H1 (cell line): ENCODE measurements at regions of chr7 and their contacts with region 1.

Region 1: GRCh38 chr7:142445019-142445686 is 187.3 kb upstream of the PRSS58 start:
- DNase-seq: peak in 1 of 2 experiments; percentile 83
- H3K4me3 ChIP-seq: no peak overlapping the region
- H3K27ac ChIP-seq: no peak overlapping the region
- H3K4me1 ChIP-seq: peaks cover 2 to 13% (median 4%) of the 10 kb centered on the region in 4 experiments; a peak in 4 of 7 replicates
- H3K27me3 ChIP-seq: no peaks in the 10 kb centered on the region
- CTCF ChIP-seq: peak; percentile 72 to 93 (median 83)
- EP300 ChIP-seq: no peak
- POLR2A ChIP-seq: no peak
- RAD21 ChIP-seq: peak; percentile 80 to 82

Region 2: DNA sequence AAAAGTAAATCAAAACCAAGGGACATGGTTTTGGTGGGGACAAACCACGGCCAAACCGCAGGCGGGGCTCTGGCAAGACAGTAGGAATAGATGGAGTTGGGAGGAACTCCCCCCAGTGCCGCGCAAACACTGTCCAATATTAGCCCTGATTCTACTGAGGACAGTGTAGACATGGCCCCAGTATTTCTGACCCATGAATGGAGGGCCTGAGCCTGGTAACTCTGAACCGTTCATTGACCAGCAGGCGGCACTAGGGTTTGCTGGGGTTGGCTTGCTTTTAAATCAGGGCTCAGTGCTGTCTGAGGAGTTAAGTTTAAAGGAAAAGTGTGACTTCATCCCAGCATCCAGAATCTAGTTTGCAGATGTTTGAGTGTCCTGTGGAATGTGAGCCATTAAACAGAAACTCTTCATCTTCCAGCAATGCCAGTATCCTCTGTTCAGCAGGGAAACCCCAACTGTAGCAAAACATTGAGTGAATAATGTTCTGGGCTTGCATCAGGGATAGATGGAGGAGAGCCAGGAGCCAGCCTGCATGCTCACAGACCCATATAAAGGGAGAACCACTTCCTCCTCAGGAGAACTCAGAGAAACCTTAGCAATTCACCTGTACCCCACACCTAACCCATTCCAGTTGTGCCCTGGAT is 39.9 kb before region 1 on chr7:
- CTCF ChIA-PET with region 1: interaction called, 11 read pairs
- POLR2A ChIA-PET with region 1: no interaction called
- DNase-seq: no peak
- H3K4me3 ChIP-seq: no peak overlapping the region
- H3K27ac ChIP-seq: no peak overlapping the region
- H3K4me1 ChIP-seq: no peaks in the 10 kb centered on the region
- H3K27me3 ChIP-seq: no peaks in the 10 kb centered on the region
- CTCF ChIP-seq: no peak
- EP300 ChIP-seq: no peak
- POLR2A ChIP-seq: no peak
- RAD21 ChIP-seq: no peak

Region 3: DNA sequence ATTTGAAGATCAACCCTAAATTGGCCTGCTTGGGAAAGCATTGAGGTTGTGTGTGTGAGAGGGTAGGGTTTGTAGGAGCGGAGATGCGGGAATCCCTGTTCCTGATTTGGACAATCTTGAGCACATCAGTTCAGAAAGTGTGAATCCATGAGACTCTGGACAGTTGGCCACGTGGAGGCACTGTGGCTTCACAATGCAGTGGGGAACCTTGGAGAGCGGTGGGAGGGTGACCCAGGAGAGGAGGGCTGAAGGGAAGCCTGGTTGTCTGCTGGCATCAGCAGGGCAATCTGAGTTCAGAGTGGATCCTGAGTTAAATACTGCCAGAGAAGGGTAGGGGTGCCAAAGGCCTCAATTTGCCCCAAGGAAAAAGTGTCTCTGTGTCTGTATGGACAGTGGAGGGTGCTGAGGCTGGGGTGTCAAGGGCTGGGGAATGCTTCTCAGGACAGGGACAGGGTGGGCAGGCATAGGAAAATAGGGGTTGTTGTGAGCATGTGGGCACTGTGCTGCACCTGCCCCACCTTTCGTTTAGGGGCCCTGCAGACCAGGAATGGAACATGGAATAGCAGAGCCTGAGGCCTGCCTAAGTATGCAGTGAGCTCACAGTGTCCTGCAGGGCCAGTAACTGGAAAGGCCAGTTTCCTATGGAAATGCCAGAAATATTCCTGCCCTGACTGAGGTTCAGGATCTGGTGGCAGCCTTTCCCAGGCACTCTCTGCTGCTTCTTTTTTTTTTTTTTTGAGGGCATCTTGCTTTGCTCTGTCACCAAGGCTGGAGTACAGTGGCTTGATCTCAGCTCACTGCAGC is 24.4 kb before region 1 on chr7:
- CTCF ChIA-PET with region 1: interaction called, 35 read pairs
- POLR2A ChIA-PET with region 1: no interaction called
- DNase-seq: no peak
- H3K4me3 ChIP-seq: no peak overlapping the region
- H3K27ac ChIP-seq: no peak overlapping the region
- H3K4me1 ChIP-seq: peaks cover 0 to 5% (median 1%) of the 10 kb centered on the region in 4 experiments; a peak in 2 of 7 replicates
- H3K27me3 ChIP-seq: no peaks in the 10 kb centered on the region
- CTCF ChIP-seq: peak; percentile 28 to 52 (median 35)
- EP300 ChIP-seq: no peak
- POLR2A ChIP-seq: no peak
- RAD21 ChIP-seq: peak; percentile 56 to 62

Region 4: GRCh38 chr7:142469696-142470543 is 24.8 kb after region 1 on chr7:
- CTCF ChIA-PET with region 1: interaction called, 260 read pairs
- POLR2A ChIA-PET with region 1: no interaction called
- DNase-seq: no peak
- H3K4me3 ChIP-seq: no peak overlapping the region
- H3K27ac ChIP-seq: no peak overlapping the region
- H3K4me1 ChIP-seq: no peaks in the 10 kb centered on the region
- H3K27me3 ChIP-seq: no peaks in the 10 kb centered on the region; a peak in 1 of 7 replicates
- CTCF ChIP-seq: no peak
- EP300 ChIP-seq: no peak
- POLR2A ChIP-seq: no peak
- RAD21 ChIP-seq: no peak

Region 5: DNA sequence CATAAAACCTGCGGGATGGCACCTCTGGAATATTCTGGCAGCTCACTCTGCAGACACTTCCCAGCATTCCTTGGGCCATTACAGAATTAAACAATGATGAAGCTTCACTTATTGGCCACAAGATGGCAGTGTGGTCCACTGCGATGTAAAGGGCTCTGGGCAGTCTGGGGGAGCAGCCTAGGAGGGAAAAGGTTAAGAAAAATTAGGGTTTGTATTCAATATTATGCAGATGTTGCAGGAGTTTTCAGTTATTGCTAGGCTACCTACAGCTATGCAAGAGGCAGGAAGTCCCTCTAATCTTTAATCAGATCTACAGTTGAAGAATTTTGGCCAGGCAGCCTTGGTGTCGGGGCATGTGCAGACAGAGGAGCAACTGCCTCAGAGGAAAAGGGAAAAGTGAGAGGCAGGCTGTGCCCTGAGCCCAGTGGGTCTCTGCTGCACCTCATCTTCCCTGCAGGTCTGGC is 70.9 kb after region 1 on chr7:
- CTCF ChIA-PET with region 1: interaction called, 22 read pairs
- POLR2A ChIA-PET with region 1: no interaction called
- DNase-seq: peak in 1 of 2 experiments; percentile 56
- H3K4me3 ChIP-seq: no peak overlapping the region
- H3K27ac ChIP-seq: no peak overlapping the region
- H3K4me1 ChIP-seq: peaks cover 0 to 3% (median 0%) of the 10 kb centered on the region in 4 experiments; a peak in 1 of 7 replicates
- H3K27me3 ChIP-seq: no peaks in the 10 kb centered on the region
- CTCF ChIP-seq: peak; percentile 53 to 81 (median 75)
- EP300 ChIP-seq: no peak
- POLR2A ChIP-seq: no peak
- RAD21 ChIP-seq: peak; percentile 61 to 67